ENCODE measurements at regions of chr3 and their contacts with region 1.

Region 1: DNA sequence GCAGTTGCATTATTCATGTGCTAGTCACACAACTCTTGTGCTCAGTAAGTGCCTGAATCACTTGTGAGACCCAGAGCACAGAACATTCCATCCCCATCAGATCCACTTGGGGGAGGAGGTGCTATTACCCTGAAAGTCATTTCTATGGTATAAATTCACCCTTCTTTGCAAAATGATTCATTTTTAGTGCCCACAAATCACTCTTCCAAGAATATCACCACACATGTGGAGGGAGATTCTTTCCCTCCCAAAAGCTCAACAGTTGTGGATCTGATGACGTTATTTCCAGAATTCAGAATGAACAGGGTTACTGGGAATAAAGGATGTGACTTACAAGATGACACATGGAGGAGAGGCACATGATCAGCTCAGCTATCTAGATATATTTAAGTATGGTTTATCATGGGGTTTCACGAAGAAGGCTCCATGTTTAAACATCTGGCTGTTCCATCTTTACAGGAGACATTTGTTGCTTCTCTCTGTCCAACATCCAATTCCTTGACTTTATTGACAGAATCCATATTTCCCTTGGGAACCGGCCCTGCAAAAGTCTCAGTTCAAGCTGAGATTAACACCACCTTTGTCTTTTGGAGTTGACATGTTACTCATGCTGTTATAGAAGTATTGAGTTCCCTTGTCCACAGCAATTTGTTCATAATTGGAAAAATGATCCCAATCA is 214.2 kb upstream of the PROK2 start:
- DNase-seq: no peak
- H3K4me3 Mint-ChIP-seq: no peak overlapping the region
- H3K27ac Mint-ChIP-seq: peak overlapping the region; percentile 58
- H3K4me1 Mint-ChIP-seq: peaks cover 30% of the 10 kb centered on the region
- H3K27me3 Mint-ChIP-seq: no peaks in the 10 kb centered on the region

Region 2: GRCh38 chr3:71984843-71985613 is 14.1 kb before region 1 on chr3:
- intact Hi-C with region 1: loop called (anchors 1 kb)
- DNase-seq: peak; percentile 75
- H3K4me3 Mint-ChIP-seq: peak overlapping the region; percentile 74
- H3K27ac Mint-ChIP-seq: peak overlapping the region; percentile 87
- H3K4me1 Mint-ChIP-seq: peaks cover 49% of the 10 kb centered on the region
- H3K27me3 Mint-ChIP-seq: no peaks in the 10 kb centered on the region

Region 3: GRCh38 chr3:72041511-72041910 is 42.4 kb after region 1 on chr3:
- intact Hi-C with region 1: no loop called
- DNase-seq: no peak
- H3K4me3 Mint-ChIP-seq: no peak overlapping the region
- H3K27ac Mint-ChIP-seq: no peak overlapping the region
- H3K4me1 Mint-ChIP-seq: peaks cover 2% of the 10 kb centered on the region
- H3K27me3 Mint-ChIP-seq: no peaks in the 10 kb centered on the region

Measured in activated CD4-positive, alpha-beta T cell treated with anti-CD3 and anti-CD28 coated beads, Interleukin-2, amount 10 ng/mL, durations not matched to agents 24 days and 14 days (primary cell).